Mammary epithelial cell (primary cell): ENCODE measurements at regions of chr15 and their contacts with region 1.

Region 1: DNA sequence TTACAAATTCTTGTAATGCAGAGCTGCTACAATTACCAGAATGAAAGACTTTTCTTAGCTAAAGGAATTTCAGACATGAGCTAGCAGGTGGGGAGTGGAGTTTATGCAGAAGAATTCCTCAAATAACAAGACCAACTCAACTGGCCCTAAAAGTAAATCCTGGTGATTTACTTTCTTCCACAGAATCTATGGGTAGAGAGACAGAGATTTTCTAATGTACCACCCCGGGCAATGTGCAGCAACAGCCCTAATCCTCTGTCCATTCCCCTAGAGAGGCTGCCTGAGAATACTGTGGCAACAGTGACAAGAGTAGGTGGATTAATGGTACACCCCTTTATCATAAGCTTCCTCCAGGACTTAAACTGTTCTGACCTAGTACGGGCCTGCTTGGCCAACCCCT is 55.2 kb downstream of the AQR start:
- DNase-seq: no peak
- H3K4me3 ChIP-seq: no peak overlapping the region
- H3K27ac ChIP-seq: no peak overlapping the region
- H3K4me1 ChIP-seq: no peaks in the 10 kb centered on the region
- H3K27me3 ChIP-seq: no peaks in the 10 kb centered on the region
- CTCF ChIP-seq: no peak

Region 2: DNA sequence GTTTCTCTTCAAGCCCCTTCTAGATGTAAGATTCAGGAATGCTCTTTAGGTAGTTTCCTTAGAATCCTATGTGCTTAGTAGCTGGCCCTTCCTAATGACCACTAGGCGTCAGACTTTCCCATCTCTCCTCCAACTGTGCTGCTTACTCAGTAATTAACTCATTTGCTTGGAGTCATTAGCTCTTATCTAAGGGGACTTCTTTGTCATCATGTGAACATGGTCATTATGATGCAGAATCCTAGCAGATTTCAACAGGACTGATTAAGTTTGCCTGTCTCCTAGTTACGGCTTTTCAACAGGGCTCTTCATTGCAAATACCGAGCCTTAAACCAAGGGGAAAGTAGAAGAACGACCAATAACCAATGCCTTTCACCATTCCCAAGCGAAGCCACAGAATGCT is 205.9 kb before region 1 on chr15:
- CTCF ChIA-PET with region 1: interaction called, 11 read pairs
- dilution Hi-C with region 1: no loop called
- in situ Hi-C with region 1: no loop called
- intact Hi-C with region 1: no loop called
- DNase-seq: peak; percentile 42
- H3K4me3 ChIP-seq: no peak overlapping the region
- H3K27ac ChIP-seq: no peak overlapping the region
- H3K4me1 ChIP-seq: no peaks in the 10 kb centered on the region
- H3K27me3 ChIP-seq: no peaks in the 10 kb centered on the region
- CTCF ChIP-seq: peak; percentile 94 to 95

Region 3: DNA sequence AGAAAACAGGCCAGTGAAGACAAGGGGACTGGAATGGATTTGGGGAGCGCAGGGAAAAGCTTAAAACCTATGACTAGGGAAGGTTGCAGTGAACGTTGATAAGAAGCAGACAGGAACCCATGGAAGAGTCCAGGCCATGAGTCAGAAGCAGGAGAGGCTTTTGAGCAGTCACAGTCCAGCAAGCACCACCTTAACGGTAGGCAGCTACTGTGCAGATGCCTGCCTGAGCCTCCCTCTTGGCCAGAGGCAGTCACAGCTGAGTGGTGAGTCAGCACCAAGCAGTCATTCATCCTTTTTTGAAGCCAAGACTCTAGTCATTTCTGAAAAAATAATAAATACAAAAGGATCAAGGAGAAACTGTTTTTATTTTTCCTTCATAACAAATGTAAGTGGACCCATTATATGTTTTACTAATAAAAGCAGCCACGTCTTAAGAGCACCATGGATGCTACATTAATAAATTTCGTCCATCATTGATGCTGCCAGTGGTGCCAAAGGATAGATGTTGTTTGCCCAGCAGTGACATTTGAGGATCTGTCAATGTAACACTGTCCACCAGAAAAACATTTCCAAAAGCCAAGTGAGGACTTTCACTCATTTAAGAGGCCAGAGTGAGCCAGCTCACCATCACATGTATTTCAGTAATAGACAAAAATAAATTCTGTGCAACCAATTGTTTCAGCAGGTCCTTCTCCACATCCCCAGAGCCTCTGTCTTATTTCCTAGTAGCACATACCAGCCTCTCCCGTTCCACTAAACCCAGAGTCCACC is 76.9 kb before region 1 on chr15:
- CTCF ChIA-PET with region 1: no interaction called
- dilution Hi-C with region 1: loop called (anchors 5 kb)
- in situ Hi-C with region 1: no loop called
- intact Hi-C with region 1: no loop called
- DNase-seq: peak; percentile 87
- H3K4me3 ChIP-seq: no peak overlapping the region
- H3K27ac ChIP-seq: no peak overlapping the region
- H3K4me1 ChIP-seq: peaks cover 5% of the 10 kb centered on the region
- H3K27me3 ChIP-seq: no peaks in the 10 kb centered on the region
- CTCF ChIP-seq: no peak

Region 4: DNA sequence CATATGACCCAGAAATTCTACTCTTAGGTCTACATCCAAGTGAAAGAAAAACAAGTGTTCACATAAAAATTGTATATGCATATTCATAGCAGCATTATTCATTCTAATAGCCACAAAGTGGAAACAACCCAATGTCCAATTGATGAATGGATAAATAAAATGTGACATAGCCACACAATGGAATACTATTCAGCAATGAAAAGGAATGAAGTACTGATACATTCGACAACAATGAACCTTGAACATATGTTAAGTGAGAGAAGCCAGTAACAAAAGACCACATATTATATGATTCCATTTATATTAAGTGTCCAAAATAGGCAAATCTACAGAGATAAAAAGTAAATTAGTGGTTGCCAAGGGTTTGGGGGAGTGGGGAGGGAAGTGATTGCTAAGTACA is 48.8 kb before region 1 on chr15:
- CTCF ChIA-PET with region 1: no interaction called
- dilution Hi-C with region 1: no loop called
- in situ Hi-C with region 1: no loop called
- intact Hi-C with region 1: no loop called
- DNase-seq: no peak
- H3K4me3 ChIP-seq: no peak overlapping the region
- H3K27ac ChIP-seq: no peak overlapping the region
- H3K4me1 ChIP-seq: no peaks in the 10 kb centered on the region
- H3K27me3 ChIP-seq: no peaks in the 10 kb centered on the region
- CTCF ChIP-seq: no peak